ENCODE measurements at regions of chr22 and their contacts with region 1.

Region 1: GRCh38 chr22:39490135-39490798 is 11.8 kb upstream of the MIEF1 start:
- DNase-seq: peak; percentile 93

Region 2: DNA sequence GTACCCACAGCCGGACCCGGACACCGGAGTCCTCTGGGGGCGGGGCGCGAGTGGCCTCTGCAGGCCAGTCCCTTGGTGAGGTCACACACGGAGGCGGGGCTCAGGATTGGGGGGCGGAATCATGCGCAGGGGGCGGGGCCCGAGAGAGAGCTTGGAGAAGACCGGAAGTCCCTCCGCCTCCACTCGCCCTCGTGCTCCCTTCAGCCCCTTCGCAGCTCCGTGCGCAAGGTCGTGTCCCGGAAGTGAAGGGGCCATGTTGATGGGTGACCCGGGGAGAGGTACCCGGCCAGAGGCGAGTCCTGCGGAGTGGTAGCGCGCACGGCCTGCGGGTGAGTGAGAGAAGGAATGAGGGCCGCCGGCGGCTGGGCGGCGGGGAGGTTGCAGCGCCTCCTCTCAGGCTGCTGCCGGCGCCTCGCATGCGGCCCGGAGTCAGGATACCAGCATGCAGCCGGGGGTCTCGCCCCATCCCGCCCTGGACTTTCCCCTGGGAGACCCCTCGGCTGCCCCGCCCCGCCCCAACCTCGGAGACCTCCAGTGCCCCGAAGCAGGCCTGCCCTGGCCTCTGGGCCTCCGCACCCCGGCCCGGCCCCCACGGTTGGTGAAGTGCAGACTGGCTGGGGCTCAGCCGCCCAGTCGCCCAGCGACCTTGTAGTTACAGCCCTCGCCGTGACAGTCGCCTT is 12.0 kb after region 1 on chr22 and contains the start of gene MIEF1:
- CTCF ChIA-PET with region 1: interaction called, 7 read pairs
- POLR2A ChIA-PET with region 1: interaction called, 25 read pairs
- DNase-seq: peak; percentile 99